BJ (cell line): ENCODE measurements at regions of chr21 and their contacts with region 1.

Region 1: GRCh38 chr21:27306791-27307775 is 340.2 kb upstream of the ADAMTS5 start:
- DNase-seq: peak; percentile 35
- H3K4me3 ChIP-seq: no peak overlapping the region
- H3K27me3 ChIP-seq: no peaks in the 10 kb centered on the region
- CTCF ChIP-seq: no peak

Region 2: GRCh38 chr21:28336314-28336713 is 1029.2 kb after region 1 on chr21:
- CTCF ChIA-PET with region 1: no interaction called
- POLR2A ChIA-PET with region 1: interaction called, 10 read pairs
- DNase-seq: peak; percentile 55
- H3K4me3 ChIP-seq: no peak overlapping the region
- H3K27me3 ChIP-seq: no peaks in the 10 kb centered on the region
- CTCF ChIP-seq: peak; percentile 49